IMR-90 (cell line): ENCODE measurements at regions of chr11 and their contacts with region 1.

Region 1: DNA sequence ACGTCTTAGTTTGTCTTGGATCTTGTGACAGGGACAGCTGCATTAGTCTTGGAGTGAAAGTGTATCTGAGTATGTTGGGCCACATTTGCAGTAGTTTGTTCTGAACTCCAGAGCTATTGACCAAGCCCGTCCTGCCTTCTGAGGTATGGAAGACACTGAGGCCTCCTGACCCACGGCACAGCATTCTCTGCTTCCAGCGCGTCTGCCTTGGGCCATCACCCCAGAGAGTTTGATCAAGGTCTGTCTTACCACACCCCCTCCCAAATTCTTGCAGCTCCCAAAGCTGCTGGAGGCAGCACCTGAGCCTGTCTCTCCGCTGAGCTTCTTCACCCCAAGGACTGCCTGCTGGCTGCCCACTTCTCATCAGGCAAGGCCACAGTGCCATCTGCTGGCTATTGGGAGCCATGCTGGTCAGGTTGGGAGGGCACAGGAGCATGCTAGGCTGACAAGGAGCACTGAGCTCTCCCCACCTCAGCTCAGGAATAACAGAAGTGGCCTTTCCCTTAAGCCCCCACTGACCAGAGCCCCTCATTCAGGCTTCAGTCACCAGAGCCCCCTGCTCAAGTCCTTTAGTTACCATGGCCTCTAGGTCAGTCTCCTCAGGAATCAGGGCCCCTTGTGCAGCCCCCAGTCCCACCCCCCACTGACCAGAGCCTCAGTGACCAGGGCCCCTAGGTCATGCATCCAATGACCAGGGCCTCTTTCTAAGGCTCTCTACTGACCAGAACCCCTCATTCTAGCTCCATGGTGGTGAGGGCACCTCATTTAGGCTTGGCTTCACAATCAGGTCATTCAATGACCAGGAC is 27.2 kb upstream of the SMPD1 start:
- DNase-seq: peak; percentile 77
- ATAC-seq: peak; percentile 99
- H3K4me3 ChIP-seq: no peak overlapping the region
- H3K27ac ChIP-seq: no peak overlapping the region
- H3K4me1 ChIP-seq: 0 out of 2 replicates have a peak, but pooled peaks cover 2% of the 10 kb centered on the region
- H3K27me3 ChIP-seq: peaks cover 3% of the 10 kb centered on the region
- CTCF ChIP-seq: peak; percentile 96
- POLR2A ChIP-seq: no peak
- RAD21 ChIP-seq: peak; percentile 93

Region 2: DNA sequence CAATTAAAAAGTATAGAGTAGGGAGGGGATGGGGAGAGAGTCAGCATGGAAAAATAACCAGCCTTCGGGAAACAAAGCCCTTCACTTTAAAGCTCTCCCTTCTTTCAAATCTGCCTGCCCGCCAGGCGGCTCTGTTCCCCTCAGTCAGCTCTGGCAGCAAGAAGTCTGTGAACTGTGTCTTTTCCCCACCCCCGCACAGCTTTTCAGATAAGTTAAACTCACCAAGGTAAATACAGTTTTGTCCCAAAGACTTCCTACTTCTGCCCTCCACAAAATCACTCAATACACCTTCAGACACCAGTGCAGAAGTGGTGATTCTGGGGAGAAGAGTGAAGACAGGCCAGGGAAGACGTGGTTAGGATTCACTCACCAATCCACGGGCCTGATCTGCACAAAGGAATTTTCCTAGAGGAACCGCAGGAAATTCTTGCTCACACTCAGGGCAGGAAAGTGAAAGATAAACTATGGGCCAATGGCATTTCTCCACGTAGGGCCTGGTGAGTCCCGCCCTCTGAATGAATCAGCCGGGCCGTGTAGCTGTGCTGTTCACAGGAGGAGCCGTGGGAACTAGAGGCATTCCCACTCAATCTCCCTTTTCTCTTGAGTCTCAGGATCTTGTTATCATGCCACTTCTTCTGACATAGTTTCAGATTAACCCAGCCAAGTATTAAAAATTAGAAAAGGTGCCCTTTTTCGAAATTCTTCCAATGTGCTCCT is 678.3 kb before region 1 on chr11 and contains the start of gene TRIM5:
- CTCF ChIA-PET with region 1: no interaction called
- POLR2A ChIA-PET with region 1: no interaction called
- dilution Hi-C with region 1: no loop called
- in situ Hi-C with region 1: loop called (anchors 25 kb)
- intact Hi-C with region 1: no loop called
- DNase-seq: peak; percentile 99
- ATAC-seq: peak; percentile 95
- H3K4me3 ChIP-seq: peak within 1 kb of the TSS; percentile 56
- H3K27ac ChIP-seq: peak within 1 kb of the TSS; percentile 67
- H3K4me1 ChIP-seq: no peaks in the 10 kb centered on the region
- H3K27me3 ChIP-seq: no peaks in the 10 kb centered on the region
- CTCF ChIP-seq: peak; percentile 58
- POLR2A ChIP-seq: peak; percentile 95
- RAD21 ChIP-seq: peak; percentile 46
- total RNA-seq, gene TRIM5: 49.1 and 58.0 TPM in 2 replicates

Region 3: DNA sequence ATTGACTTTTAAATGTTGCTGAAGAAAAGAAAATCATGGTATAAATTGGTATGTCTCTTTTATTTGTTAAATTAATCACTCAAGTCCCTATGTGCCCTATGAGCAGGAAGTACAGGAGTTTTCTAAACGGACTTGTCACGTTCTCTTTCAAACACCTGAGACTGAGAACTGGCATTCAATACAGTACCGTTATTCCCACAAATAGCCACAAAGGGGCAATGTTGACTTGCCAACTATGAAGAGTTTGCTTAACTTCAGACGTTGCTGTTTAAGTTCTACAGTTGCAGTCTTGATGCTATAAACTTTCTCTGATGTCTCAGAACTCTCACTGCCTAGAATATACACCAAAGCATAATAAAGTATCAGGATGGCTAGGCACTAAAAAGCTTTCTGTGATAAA is 340.1 kb before region 1 on chr11:
- CTCF ChIA-PET with region 1: interaction called, 5 read pairs
- POLR2A ChIA-PET with region 1: no interaction called
- dilution Hi-C with region 1: no loop called
- in situ Hi-C with region 1: loop called (anchors 10 kb)
- intact Hi-C with region 1: loop called (anchors 1 kb)
- DNase-seq: peak; percentile 43
- ATAC-seq: peak; percentile 56
- H3K4me3 ChIP-seq: no peak overlapping the region
- H3K27ac ChIP-seq: no peak overlapping the region
- H3K4me1 ChIP-seq: no peaks in the 10 kb centered on the region
- H3K27me3 ChIP-seq: no peaks in the 10 kb centered on the region
- CTCF ChIP-seq: peak; percentile 58
- POLR2A ChIP-seq: no peak
- RAD21 ChIP-seq: peak; percentile 67

Region 4: DNA sequence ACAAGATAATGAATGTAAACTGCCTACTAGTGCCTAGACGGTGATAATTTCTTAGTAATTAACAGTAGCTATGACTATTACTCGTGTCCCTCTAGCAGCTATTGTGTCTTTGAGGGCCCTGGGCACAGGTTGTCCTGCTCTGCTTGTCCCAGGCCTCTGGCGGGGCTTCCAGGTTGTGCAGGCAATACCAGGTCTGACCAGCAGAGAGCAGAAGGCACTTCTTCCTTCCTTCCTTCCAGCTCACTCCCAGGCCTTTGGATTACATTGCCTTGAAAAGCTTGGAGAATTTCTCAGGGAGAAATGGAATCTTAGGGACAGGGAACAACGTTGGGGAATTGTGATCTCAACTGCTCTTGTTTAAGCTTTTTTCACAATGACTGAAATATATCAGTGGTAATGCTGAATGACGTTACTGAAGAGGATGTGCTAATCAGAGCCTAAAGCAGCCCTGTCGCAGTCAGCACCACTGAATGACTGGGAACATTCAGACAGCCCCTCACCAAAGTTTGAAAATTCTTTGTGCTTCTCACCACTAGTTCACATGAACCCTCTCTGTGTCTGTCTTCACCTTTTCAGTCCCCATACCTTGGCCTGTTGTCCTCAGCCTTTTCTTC is 111.8 kb before region 1 on chr11:
- CTCF ChIA-PET with region 1: interaction called, 43 read pairs
- POLR2A ChIA-PET with region 1: no interaction called
- dilution Hi-C with region 1: no loop called
- in situ Hi-C with region 1: no loop called
- intact Hi-C with region 1: no loop called
- DNase-seq: peak; percentile 75
- ATAC-seq: peak; percentile 89
- H3K4me3 ChIP-seq: no peak overlapping the region
- H3K27ac ChIP-seq: no peak overlapping the region
- H3K4me1 ChIP-seq: peaks cover 11% of the 10 kb centered on the region
- H3K27me3 ChIP-seq: peaks cover 9% of the 10 kb centered on the region
- CTCF ChIP-seq: peak; percentile 91
- POLR2A ChIP-seq: no peak
- RAD21 ChIP-seq: peak; percentile 74

Region 5: DNA sequence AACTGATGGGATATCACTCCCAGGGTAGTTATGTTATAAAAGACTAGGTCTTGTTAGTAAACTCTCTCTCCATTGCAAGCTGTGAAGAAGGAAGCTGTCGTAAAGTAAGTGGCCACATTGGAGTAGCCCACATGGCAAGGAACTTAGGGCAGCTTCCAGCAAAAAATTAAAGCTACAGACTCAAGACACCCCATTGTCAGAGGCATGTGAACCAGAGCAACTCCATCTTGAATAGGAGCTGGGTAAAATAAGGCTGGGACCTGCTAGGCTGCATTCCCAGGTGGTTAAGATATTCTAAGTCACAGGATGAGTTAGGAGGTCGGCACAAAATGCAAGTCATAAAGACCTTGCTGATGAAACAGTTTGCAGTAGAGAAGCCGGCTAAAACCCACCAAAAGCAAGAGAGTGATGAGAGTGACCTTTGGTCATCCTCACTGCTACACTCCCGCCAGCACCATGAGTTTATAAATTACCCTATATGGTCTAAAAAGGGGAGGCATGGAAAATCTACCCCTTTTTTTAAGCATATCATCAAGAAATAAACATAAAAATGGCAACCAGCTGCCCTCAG is 79.5 kb before region 1 on chr11:
- CTCF ChIA-PET with region 1: interaction called, 11 read pairs
- POLR2A ChIA-PET with region 1: no interaction called
- dilution Hi-C with region 1: no loop called
- in situ Hi-C with region 1: no loop called
- intact Hi-C with region 1: no loop called
- DNase-seq: no peak
- ATAC-seq: no peak
- H3K4me3 ChIP-seq: no peak overlapping the region
- H3K27ac ChIP-seq: no peak overlapping the region
- H3K4me1 ChIP-seq: no peaks in the 10 kb centered on the region
- H3K27me3 ChIP-seq: peaks cover 32% of the 10 kb centered on the region
- CTCF ChIP-seq: no peak
- POLR2A ChIP-seq: no peak
- RAD21 ChIP-seq: no peak

Region 6: DNA sequence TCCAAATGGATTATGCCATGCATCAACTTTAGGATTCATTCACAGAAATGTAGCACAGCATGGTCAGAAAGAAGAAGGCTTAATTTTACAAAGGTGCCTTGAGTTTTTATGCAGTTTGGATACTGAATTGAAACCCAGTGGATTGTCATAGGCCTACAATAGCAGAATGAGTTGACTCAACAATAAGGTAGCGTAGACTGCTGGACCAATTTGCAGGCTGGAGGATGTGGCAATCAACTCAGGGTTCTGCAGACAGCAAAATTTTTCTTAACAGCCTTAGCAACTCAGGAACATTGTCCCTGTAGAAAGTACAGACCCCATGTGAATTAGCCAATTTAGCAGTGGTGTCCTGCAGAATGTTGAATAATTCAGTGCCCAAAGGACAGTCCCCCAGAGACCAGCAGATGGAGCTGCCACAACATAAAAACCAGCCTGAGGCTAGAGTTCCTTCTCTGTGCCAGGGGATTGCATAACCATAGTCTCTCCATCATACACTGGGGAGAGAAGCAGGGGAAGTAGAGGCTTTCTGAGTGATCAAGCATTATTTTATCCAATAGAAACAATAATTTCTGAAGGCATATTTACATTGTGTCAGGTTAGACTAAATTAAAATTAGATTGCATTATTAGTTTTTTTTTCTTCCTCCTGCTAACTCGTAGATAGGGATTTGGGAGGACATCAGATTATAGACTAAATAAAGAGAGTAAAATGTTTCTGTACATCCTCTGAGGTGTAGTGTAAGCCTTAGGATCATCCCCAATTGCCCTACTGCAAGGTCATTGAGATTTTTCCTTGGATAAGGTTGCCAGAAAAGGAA is 340.4 kb after region 1 on chr11:
- CTCF ChIA-PET with region 1: no interaction called
- POLR2A ChIA-PET with region 1: no interaction called
- dilution Hi-C with region 1: no loop called
- in situ Hi-C with region 1: no loop called
- intact Hi-C with region 1: no loop called
- DNase-seq: peak; percentile 57
- ATAC-seq: peak; percentile 81
- H3K4me3 ChIP-seq: no peak overlapping the region
- H3K27ac ChIP-seq: no peak overlapping the region
- H3K4me1 ChIP-seq: no peaks in the 10 kb centered on the region
- H3K27me3 ChIP-seq: no peaks in the 10 kb centered on the region
- CTCF ChIP-seq: peak; percentile 63
- POLR2A ChIP-seq: no peak
- RAD21 ChIP-seq: peak; percentile 32; the same call in 1 of the 2 replicates